Calu3 (cell line): ENCODE measurements at regions of chr4 and their contacts with region 1.

Region 1: DNA sequence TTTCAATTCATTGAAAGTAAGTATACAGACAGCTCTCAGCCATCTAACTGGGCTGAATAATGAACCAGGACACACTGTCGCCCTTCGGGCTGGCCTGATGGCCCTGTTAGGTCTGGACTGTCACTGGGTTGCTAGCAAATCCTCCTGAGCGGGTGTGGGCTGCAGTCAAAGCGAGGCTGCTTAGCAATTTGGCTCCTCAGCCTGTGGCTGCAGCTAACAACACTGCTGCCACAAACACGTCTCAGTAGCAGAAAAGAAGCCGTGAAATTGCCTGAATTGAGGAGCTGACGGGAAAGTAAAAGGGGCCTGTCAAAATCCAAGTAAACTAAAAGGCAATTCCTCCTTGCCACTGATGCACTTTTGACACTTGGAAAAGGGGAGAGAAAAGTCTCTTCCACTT is 72.8 kb downstream of the SMIM20 start:
- DNase-seq: no peak
- H3K4me3 Mint-ChIP-seq: no peak overlapping the region
- H3K27ac Mint-ChIP-seq: no peak overlapping the region
- H3K4me1 Mint-ChIP-seq: no peaks in the 10 kb centered on the region
- H3K27me3 Mint-ChIP-seq: no peaks in the 10 kb centered on the region
- CTCF ChIP-seq: no peak

Region 2: DNA sequence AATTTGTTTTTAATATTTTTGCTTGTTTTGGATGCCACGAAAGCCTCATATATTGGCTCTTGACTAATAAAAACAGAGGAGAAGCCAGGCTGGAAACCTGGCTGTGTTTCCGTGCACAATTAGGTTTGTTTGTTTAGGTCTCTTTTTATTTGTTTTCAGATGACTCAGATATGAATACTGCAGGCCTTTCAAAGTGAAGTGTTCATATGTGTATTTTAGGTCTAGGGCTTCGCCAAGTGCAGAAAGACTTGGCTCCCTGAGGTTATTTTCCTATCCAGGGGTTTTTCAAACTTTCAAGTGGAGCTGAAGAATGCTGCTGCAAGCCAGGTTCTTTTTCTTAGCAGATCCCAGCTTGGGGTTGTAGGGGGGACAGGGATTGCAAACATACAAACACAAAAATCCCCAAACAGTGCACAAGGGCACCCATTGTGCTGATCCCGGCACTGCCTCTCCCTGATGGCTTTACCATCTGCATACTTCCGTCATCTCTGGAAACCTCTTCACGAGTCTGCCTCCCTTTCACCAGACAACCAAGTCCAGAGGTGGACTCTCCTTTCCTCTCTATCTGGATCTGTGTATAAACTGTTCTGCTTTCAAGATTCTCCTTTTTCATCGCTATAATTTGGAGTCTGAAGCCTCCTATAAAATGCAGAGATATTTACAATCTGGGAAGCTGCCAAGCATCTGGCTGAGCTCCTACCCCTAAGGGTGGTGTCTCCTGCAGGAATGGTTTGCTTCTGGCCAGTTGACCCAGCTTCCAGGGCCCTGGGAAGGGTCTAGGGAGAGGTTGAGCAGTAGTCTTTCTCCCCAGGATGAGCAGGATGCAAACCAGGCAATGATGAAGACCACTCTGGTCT is 35.8 kb after region 1 on chr4:
- CTCF ChIA-PET with region 1: no interaction called
- intact Hi-C with region 1: loop called (anchors 5 kb)
- DNase-seq: peak; percentile 8
- H3K4me3 Mint-ChIP-seq: peak overlapping the region; percentile 28
- H3K27ac Mint-ChIP-seq: peak overlapping the region; percentile 19
- H3K4me1 Mint-ChIP-seq: peaks cover 33% of the 10 kb centered on the region
- H3K27me3 Mint-ChIP-seq: no peaks in the 10 kb centered on the region
- CTCF ChIP-seq: no peak